ENCODE measurements at regions of chr10 and their contacts with region 1.

Region 1: DNA sequence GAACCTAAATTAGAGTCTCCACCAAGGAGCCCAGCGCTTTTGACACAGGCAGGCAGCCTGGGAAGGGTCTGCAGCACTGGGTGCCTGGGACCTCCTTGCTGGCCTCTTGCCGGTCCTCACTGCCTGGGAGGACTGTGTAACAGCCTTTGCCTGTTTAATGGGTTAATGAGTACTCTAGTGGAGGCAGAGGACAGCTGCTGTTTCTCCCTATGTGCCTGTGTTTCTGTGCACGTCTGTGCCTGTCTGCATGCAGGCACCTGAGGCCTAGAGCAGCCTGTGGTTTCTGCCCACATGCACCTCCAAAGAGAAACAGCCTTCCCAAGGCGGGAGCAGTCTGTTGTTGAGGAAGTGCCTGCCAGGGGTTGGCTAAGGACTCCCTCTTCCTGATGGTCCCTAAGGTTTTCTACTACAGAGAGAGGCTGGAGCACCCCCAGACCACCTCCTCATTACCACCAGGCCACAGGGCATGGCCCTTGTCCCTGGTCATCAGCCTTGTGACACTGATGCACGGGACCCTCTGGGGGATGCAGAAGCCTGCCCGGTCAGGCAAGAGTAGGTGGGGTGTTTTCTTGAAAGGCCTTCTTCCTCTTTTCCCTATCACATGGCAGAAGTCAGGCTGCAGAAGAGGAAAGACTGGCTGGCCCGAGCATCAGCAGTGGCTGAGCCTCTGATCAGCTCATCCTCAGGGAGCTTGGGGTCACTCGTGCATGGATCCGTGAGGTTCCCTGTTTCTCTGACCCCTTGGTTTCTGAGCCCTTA is 14.2 kb downstream of the SLC29A3 start:
- DNase-seq: peak in 1 of 2 donors; percentile 57
- H3K4me3 ChIP-seq: no peak overlapping the region
- H3K27ac ChIP-seq: peak overlapping the region in 1 of 2 donors; percentile 52
- H3K4me1 ChIP-seq: peaks cover 0 to 7% of the 10 kb centered on the region in 2 donors
- H3K27me3 ChIP-seq: no peaks in the 10 kb centered on the region
- CTCF ChIP-seq: no peak
- POLR2A ChIP-seq: no peak

Region 2: GRCh38 chr10:71319042-71319799 is 14.1 kb before region 1 on chr10 and contains the start of gene SLC29A3:
- intact Hi-C with region 1: no loop called
- DNase-seq: peak; percentile 67 to 80
- H3K4me3 ChIP-seq: peak within 1 kb of the TSS; percentile 74 to 90 (median 75)
- H3K27ac ChIP-seq: peak within 1 kb of the TSS; percentile 85 to 91
- H3K4me1 ChIP-seq: peaks cover 2 to 10% of the 10 kb centered on the region in 2 donors
- H3K27me3 ChIP-seq: no peaks in the 10 kb centered on the region
- CTCF ChIP-seq: peak; percentile 52 to 67 (median 64)
- POLR2A ChIP-seq: peak; percentile 49
- total RNA-seq, gene SLC29A3: 5.6 to 12.0 (median 6.2) TPM

Region 3: DNA sequence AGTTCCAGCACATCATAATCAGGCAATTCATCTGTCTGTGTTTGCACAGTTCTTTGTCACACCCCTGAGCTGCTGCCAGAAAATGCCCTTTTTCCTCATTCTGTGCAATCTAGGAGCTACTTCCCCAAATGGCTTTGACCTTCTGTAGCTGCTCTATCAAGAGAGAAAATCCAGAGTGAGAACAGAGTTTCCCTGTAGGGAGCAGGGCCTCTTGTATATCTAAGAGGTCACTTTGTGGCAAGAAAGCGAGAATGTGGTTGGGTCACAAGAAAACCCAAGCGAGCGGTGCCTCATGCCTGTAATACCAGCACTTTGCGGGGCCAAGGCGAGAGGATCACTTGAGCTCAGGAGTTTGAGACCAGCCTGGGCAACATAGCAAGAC is 10.1 kb after region 1 on chr10:
- intact Hi-C with region 1: no loop called
- DNase-seq: no peak
- H3K4me3 ChIP-seq: no peak overlapping the region
- H3K27ac ChIP-seq: no peak overlapping the region
- H3K4me1 ChIP-seq: no peaks in the 10 kb centered on the region
- H3K27me3 ChIP-seq: no peaks in the 10 kb centered on the region
- CTCF ChIP-seq: no peak
- POLR2A ChIP-seq: no peak

Region 4: DNA sequence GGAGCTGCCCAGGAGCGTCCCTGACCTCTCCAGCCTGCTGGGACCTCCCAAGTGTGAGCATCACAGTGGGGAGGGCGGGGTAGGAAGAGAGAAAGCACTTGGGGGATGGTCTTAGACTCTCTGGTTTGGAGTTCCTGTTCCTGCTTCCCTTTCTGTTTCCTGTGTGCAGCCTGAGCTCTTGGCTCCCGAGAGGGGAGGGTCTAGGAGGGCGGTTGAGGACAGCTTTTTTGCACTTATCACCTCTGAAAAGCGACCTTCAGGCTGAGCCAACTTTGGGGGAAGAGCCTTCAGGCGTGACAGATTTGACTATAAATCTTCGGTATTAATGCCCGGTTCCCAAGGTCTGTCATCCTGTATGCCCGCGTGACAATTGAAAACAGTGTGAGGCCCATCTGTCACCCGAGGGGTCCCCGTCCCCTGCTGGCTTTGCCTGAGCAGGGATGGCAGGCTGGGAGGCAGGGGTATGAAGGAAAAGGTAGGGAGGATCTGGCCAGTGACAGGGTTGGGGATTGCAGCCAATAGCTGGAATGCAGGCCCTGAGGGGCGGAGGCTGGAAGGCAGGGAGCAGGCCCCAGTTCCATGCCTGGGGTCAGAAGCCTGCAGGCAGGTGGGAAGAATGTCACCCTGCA is 142.0 kb after region 1 on chr10:
- intact Hi-C with region 1: no loop called
- DNase-seq: no peak
- H3K4me3 ChIP-seq: no peak overlapping the region
- H3K27ac ChIP-seq: no peak overlapping the region
- H3K4me1 ChIP-seq: peaks cover 0 to 7% of the 10 kb centered on the region in 2 donors
- H3K27me3 ChIP-seq: no peaks in the 10 kb centered on the region
- CTCF ChIP-seq: no peak
- POLR2A ChIP-seq: no peak

Region 5: GRCh38 chr10:71845410-71846405 is 512.4 kb after region 1 on chr10:
- intact Hi-C with region 1: loop called (anchors 5 kb)
- DNase-seq: no peak
- H3K4me3 ChIP-seq: no peak overlapping the region
- H3K27ac ChIP-seq: peak overlapping the region; percentile 27 to 52
- H3K4me1 ChIP-seq: peaks cover 0 to 7% of the 10 kb centered on the region in 2 donors
- H3K27me3 ChIP-seq: no peaks in the 10 kb centered on the region
- CTCF ChIP-seq: no peak
- POLR2A ChIP-seq: no peak

Measured in breast epithelium (tissue), 4 donors.